AG04449 (cell line): ENCODE measurements at regions of chr19 and their contacts with region 1.

Region 1: GRCh38 chr19:32357720-32358119 is 12.3 kb downstream of the ZNF507 start:
- DNase-seq: no peak
- H3K4me3 ChIP-seq: no peak overlapping the region
- CTCF ChIP-seq: no peak

Region 2: GRCh38 chr19:32141840-32142511 is 215.7 kb before region 1 on chr19:
- CTCF ChIA-PET with region 1: no interaction called
- POLR2A ChIA-PET with region 1: no interaction called
- DNase-seq: no peak
- H3K4me3 ChIP-seq: no peak overlapping the region
- CTCF ChIP-seq: no peak

Region 3: GRCh38 chr19:32224371-32225244 is 133.1 kb before region 1 on chr19:
- CTCF ChIA-PET with region 1: no interaction called
- POLR2A ChIA-PET with region 1: no interaction called
- DNase-seq: no peak
- H3K4me3 ChIP-seq: peak overlapping the region; percentile 32
- CTCF ChIP-seq: peak; percentile 87

Region 4: GRCh38 chr19:32345261-32346207 is 12.2 kb before region 1 on chr19 and contains the start of gene ZNF507:
- CTCF ChIA-PET with region 1: interaction called, 26 read pairs
- POLR2A ChIA-PET with region 1: interaction called, 4 read pairs
- DNase-seq: no peak
- H3K4me3 ChIP-seq: peak within 1 kb of the TSS; percentile 92
- CTCF ChIP-seq: peak; percentile 19